ENCODE measurements at regions of chrX and their contacts with region 1.

Region 1: GRCh38 chrX:70133303-70134115 is at the start of gene IGBP1:
- DNase-seq: peak; percentile 78 to 88
- H3K4me3 ChIP-seq: peak within 1 kb of the TSS; percentile 99
- H3K27ac ChIP-seq: peak within 1 kb of the TSS; percentile 74
- H3K4me1 ChIP-seq: peaks cover 20% of the 10 kb centered on the region
- H3K27me3 ChIP-seq: no peaks in the 10 kb centered on the region
- CTCF ChIP-seq: peak; percentile 70
- total RNA-seq, gene IGBP1: 57.6 and 71.9 TPM in 2 replicates

Region 2: GRCh38 chrX:70168238-70169188 is 35.0 kb after region 1 on chrX:
- CTCF ChIA-PET with region 1: interaction called, 26 read pairs
- POLR2A ChIA-PET with region 1: no interaction called
- intact Hi-C with region 1: no loop called
- DNase-seq: peak; percentile 37 to 63
- H3K4me3 ChIP-seq: peak overlapping the region; percentile 34; the same call in 1 of the 2 replicates
- H3K27ac ChIP-seq: peak overlapping the region; percentile 58
- H3K4me1 ChIP-seq: peaks cover 24% of the 10 kb centered on the region; the same call in 1 of the 2 replicates
- H3K27me3 ChIP-seq: no peaks in the 10 kb centered on the region
- CTCF ChIP-seq: no peak

Region 3: DNA sequence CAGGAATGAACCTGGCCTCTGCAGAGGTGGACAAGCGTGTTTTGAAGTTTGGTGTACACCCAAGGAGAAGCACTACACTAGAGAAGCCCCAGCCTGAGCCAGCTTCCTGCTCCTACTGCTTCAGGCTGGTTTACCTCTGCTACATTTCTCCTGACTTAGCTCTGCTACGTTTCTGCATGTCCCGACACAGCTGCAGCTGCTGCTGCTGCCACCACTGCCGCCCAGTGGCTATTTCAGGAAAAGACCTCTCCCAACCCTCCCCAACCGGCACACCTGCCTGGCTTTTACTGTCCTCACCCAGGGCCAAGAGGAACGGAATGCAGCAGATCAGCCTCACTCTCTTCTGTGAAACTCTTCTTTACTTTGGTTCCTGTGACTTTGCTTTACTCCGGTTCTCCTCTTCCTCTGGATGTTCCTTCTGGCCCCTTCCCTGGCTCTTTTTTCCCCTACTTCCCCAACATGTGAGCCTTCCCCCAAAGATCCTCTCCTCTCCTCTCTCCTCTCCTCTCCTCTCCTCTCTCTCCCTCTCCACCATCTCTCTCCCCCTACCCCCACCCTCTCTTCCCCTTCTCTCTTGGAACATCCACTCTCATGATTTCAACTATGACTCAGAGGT is 129.6 kb after region 1 on chrX:
- CTCF ChIA-PET with region 1: interaction called, 4 read pairs
- POLR2A ChIA-PET with region 1: no interaction called
- intact Hi-C with region 1: loop called (anchors 2 kb)
- DNase-seq: peak; percentile 51 to 64
- H3K4me3 ChIP-seq: no peak overlapping the region
- H3K27ac ChIP-seq: no peak overlapping the region
- H3K4me1 ChIP-seq: no peaks in the 10 kb centered on the region
- H3K27me3 ChIP-seq: no peaks in the 10 kb centered on the region
- CTCF ChIP-seq: peak; percentile 72

Region 4: DNA sequence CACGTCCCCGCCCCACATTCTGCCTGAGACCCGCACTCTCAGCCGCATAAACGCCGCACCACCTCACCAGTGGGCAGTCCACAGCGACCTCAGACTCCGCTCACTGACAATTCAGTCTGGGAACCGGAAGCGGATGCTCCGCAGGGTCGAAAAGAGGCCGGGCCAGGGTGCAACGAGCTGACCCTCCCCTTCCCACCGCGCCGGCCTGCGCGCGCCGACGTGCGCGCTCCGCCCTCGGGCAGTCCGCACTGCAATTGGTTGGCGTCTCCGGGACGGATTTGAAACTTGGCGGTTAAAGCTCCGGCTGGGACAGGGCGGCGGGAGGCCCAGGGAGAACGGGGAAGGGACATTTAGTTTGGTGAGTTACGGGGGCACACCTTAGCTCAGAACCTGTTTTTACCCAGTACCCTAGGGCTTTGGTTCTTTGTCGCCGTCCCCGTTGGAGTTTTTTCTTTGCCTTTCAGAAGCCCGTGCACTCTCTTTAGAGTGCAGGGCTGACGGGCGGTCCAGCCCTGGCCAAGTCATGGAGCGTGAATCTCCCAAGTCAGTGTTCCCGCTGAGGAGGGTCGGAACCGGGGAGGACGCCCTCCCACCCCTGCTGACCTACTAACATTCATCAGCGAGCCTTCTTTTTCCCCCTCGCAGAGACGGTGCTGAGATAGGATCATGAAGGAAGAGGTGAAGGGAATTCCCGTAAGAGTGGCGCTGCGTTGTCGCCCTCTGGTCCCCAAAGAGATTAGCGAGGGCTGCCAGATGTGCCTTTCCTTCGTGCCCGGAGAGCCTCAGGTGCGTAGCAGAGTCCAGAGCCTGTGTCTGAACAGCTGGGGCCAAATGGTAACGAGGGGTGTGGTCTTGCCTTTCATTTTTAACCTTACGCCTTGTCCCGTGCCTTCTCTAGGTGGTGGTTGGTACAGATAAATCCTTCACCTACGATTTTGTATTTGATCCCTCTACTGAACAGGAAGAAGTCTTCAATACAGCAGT is 156.6 kb after region 1 on chrX and contains the starts of genes KIF4A and PDZD11:
- CTCF ChIA-PET with region 1: interaction called, 7 read pairs
- POLR2A ChIA-PET with region 1: interaction called, 5 read pairs
- intact Hi-C with region 1: loop called (anchors 2 kb)
- DNase-seq: peak; percentile 71 to 88
- H3K4me3 ChIP-seq: peak within 1 kb of the TSS; percentile 91
- H3K27ac ChIP-seq: no peak within 1 kb of the TSS
- H3K4me1 ChIP-seq: peaks cover 11% of the 10 kb centered on the region
- H3K27me3 ChIP-seq: no peaks in the 10 kb centered on the region
- CTCF ChIP-seq: no peak
- total RNA-seq, gene KIF4A: 36.7 and 52.9 TPM in 2 replicates
- total RNA-seq, gene PDZD11: 42.0 and 51.2 TPM in 2 replicates